Lower leg skin (tissue), 4 donors: ENCODE measurements at regions of chr5 and their contacts with region 1.

Region 1: DNA sequence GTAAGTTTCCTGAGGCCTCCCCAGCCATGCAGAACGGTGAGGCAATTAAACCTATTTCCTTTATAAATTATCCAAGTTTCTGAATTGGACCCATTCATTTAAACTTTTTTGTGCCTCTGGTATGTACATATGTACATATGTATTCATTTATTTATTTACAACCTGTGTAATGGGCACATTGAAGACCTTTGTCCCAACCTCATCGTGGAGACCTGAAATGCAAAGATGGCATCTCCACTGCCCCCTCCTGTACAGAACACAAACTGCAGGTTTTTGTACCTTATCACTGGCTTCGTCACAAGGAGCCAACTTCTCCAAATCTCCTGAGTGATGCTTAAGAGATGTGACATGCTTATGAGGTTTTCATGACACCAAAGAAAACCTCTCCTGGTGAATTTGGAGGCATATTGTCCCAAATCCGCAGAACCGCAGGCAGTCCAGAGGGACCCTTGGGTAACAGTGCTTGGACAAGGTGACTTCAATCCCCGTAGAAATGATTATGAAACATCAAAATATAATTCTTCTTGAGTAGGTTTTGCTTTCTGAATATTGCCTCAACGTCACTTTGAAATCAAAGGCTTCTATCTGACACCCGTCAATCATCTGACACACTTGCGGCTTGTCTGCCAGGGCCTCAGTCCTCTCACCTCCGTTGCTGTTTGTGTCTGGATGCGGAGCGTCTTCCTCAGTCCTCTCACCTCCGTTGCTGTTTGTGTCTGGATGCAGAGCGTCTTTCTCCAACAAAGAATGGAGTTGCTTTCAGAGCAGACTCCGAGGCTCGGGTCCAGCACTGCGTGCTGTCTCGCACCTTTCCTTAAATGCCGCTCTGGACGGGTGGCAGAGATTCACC is 135.0 kb upstream of the IRX4 start:
- DNase-seq: no peak
- H3K4me3 ChIP-seq: no peak overlapping the region
- CTCF ChIP-seq: no peak
- POLR2A ChIP-seq: no peak

Region 2: DNA sequence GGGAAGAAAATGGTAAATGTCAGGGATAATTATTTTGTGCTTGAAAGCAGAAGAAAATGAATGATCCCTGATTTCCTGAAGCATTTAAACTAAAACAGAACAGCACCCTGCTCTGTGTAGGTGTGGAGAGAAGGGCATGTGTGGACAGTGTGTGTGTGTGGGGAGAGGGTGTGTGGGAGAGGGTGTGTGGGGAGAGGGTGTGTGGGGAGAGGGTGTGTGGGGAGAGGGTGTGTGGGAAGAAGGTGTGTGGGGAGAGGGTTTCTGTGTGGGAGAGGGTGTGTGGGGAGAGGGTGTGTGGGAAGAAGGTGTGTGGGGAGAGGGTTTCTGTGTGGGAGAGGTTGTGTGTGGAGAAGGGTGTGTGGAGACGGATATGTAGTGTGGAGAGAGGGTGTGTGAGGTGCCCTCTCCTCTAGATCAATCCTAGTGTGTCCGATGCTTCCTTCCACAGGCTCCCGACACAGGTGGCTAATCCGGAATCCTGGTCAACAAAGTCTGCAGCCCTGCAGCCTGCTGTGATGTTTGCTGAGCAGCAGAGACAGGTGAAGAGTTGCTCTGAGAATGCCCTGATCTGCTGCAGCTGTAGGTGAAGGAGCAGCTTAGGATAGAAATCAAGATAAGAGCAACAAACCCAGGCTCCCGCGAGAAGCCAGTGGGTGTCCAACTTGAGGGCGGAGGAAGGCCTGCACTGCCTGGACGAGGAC is 150.5 kb before region 1 on chr5:
- intact Hi-C with region 1: no loop called
- DNase-seq: no peak
- H3K4me3 ChIP-seq: no peak overlapping the region
- CTCF ChIP-seq: no peak
- POLR2A ChIP-seq: no peak

Region 3: GRCh38 chr5:1883120-1883924 is 134.4 kb before region 1 on chr5:
- intact Hi-C with region 1: loop called (anchors 10 kb)
- DNase-seq: no peak
- H3K4me3 ChIP-seq: no peak overlapping the region
- CTCF ChIP-seq: no peak
- POLR2A ChIP-seq: no peak

Region 4: GRCh38 chr5:2052687-2053086 is 34.9 kb after region 1 on chr5:
- intact Hi-C with region 1: loop called (anchors 2 kb)
- DNase-seq: no peak
- H3K4me3 ChIP-seq: no peak overlapping the region
- CTCF ChIP-seq: no peak
- POLR2A ChIP-seq: no peak